Colonic mucosa (tissue), 4 donors: ENCODE measurements at regions of chr18 and their contacts with region 1.

Region 1: DNA sequence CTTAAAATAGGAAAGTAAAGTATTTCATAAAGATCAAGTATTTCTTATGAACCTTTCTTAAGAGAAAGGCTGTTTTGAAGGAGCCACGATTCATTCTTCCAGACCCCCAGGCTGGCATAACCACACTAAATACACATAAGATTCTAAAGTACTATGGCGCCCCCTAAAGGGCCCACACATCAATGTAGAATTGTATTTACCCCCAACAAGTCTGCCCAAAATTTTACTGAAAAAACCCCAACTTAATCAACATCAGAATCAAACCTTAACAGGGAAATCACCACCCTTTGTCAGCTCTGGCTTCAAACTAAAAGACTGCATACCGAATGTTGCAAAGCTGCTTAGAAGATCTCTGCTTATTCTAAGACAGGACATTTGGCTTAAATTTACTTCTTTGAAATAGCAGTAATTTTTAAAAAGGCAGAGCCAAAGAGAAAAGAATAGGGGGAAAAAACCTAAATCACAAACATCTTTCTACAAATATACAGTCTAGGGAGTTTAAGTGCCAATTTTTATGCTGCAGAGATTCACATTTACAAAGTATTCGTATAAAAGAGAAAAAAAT is 20.4 kb upstream of the BCL2 start:
- DNase-seq: no peak
- H3K4me3 ChIP-seq: no peak overlapping the region
- H3K27ac ChIP-seq: no peak overlapping the region
- H3K4me1 ChIP-seq: no peaks in the 10 kb centered on the region
- H3K27me3 ChIP-seq: no peaks in the 10 kb centered on the region
- CTCF ChIP-seq: peak; percentile 45

Region 2: GRCh38 chr18:63439334-63439733 is 99.3 kb after region 1 on chr18:
- intact Hi-C with region 1: loop called (anchors 10 kb)
- DNase-seq: peak; percentile 51
- H3K4me3 ChIP-seq: no peak overlapping the region
- H3K27ac ChIP-seq: no peak overlapping the region
- H3K4me1 ChIP-seq: no peaks in the 10 kb centered on the region
- H3K27me3 ChIP-seq: no peaks in the 10 kb centered on the region
- CTCF ChIP-seq: peak; percentile 61

Region 3: GRCh38 chr18:63505566-63506335 is 165.7 kb after region 1 on chr18:
- intact Hi-C with region 1: loop called (anchors 10 kb)
- DNase-seq: peak; percentile 54
- H3K4me3 ChIP-seq: no peak overlapping the region
- H3K27ac ChIP-seq: no peak overlapping the region
- H3K4me1 ChIP-seq: no peaks in the 10 kb centered on the region
- H3K27me3 ChIP-seq: no peaks in the 10 kb centered on the region
- CTCF ChIP-seq: peak; percentile 54

Region 4: DNA sequence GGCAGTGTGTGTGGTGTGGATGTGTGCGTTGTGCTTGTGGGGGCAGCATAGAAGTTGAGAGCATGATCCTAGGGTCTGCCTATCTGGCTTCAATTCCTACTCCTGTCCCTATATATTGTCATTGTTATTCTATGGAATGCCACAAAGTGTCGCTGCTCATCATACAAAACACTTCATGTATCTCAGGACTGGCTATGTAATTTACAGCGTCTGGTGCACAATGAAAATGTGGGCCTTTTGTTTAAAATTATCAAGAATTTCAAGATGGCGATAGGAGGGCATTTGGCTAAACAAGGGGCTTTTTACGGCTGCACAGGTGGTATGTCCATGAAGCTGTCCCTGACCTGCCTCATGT is 550.9 kb after region 1 on chr18:
- intact Hi-C with region 1: no loop called
- DNase-seq: no peak
- H3K4me3 ChIP-seq: no peak overlapping the region
- H3K27ac ChIP-seq: no peak overlapping the region
- H3K4me1 ChIP-seq: no peaks in the 10 kb centered on the region
- H3K27me3 ChIP-seq: no peaks in the 10 kb centered on the region
- CTCF ChIP-seq: no peak